Mammary epithelial cell (primary cell): ENCODE measurements at regions of chr5 and their contacts with region 1.

Region 1: DNA sequence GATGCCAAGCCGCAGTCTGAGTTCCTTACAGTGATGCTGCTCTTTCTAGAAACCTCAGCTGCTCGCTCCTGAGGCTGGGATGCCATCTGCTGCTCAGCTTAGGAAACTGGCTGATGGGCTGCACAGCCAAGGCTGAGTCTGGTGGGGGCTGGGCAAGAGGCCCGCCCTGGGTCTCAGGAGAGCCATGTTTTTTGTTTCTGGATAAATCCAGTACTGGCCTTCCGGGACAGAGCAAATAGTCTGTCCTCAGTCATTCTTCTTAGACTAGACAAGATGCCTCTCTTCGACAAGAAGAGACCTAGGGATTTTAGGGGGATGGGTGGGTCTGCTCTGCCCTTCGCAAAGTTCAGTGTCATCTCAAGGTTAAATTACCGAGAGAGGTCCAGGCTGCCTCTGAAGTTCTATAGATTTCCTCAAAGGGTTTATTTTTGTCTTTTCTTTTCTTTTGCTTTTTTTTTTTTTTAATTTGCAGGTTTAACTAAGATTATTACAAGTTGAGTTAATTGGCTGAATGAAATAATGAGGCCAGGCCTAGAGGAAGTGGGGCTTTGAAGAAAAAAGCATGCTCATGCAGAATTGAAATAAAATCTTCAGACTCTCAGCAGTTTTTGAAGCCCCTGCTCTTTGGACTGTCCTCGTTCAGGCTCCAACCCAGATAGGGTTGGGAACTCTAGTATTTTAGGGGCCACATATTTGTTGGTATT is 30.6 kb upstream of the MATR3 start:
- DNase-seq: peak; percentile 79
- H3K4me3 ChIP-seq: no peak overlapping the region
- H3K27ac ChIP-seq: no peak overlapping the region
- H3K4me1 ChIP-seq: peaks cover 6% of the 10 kb centered on the region
- H3K27me3 ChIP-seq: no peaks in the 10 kb centered on the region
- CTCF ChIP-seq: peak; percentile 90 to 98

Region 2: DNA sequence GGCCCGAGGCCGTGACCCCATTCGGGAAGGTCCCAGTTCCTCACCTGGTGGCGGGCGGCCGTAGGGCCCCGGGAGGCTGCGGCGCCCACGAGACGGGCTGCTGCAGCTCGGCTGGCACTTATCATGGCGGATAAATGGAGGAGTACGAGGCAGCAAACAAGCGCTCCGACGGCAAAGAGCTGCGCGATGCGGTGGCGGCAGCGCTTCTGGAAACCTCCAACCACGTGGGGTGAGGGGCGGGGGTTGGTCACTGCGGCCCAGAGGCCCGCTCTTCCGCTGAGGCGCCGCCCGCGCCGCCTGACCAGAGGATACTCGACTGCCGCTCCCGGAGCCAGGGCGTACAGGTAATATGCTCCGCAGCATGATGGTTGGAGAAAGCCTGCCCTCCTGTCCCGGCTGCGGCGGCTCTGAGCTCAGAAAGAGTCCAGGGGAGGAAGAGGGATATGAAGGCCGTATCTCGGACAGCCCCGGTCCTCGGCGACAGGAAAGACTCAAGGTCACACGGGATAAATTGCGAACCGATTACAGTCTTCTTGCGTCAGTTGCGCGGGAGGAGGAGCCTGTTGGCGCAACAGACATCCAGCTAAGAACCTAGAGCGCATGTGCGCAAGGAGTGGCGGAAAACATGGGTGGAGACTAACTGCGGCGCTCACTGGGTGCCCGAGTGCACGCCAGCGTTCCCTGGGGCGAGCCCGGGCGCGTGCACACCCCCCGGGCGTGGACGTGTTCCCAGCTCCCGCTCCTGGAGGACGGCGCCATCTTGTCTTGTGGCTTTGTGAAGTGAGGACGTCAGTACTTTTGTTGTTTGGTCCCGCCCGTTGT is 687.5 kb before region 1 on chr5 and contains the start of gene HSPA9:
- CTCF ChIA-PET with region 1: interaction called, 3 read pairs
- dilution Hi-C with region 1: no loop called
- in situ Hi-C with region 1: loop called (anchors 25 kb)
- intact Hi-C with region 1: loop called (anchors 1 kb)
- DNase-seq: peak; percentile 99
- H3K4me3 ChIP-seq: peak within 1 kb of the TSS; percentile 81 to 95 (median 91)
- H3K27ac ChIP-seq: peak within 1 kb of the TSS; percentile 100
- H3K4me1 ChIP-seq: peaks cover 10% of the 10 kb centered on the region
- H3K27me3 ChIP-seq: no peaks in the 10 kb centered on the region
- CTCF ChIP-seq: peak in 1 of 2 donors; percentile 14
- total RNA-seq, gene HSPA9: 301 to 332 TPM

Region 3: DNA sequence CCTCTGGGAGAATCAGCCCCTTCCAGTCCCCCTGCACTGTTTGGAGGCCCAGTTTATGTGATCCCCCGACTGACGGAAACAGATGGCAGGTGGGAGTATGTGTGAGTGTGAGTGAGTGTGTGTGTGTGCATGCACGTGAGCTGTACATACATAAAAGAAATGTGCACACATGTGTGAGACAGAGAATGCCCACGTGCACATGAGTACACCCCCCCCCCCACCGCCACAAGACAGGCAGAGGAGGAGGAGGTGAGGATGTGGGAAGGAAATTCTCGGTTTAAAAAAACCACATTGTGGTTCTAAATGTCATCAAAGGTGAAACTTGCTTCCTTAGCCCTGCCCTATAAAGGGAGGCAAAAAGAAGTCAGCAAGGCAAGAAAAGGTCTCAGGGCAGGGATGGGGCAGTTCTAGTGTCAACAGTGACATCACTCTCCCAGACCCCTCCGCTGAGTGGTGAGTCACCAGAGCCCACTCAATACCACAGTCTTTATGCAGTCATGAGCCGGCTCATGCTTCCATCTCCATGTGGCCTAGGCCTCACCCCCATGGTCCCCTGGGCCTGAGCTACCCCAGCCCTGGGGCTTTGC is 608.5 kb before region 1 on chr5:
- CTCF ChIA-PET with region 1: no interaction called
- dilution Hi-C with region 1: no loop called
- in situ Hi-C with region 1: no loop called
- intact Hi-C with region 1: loop called (anchors 1 kb)
- DNase-seq: peak; percentile 55
- H3K4me3 ChIP-seq: no peak overlapping the region
- H3K27ac ChIP-seq: no peak overlapping the region
- H3K4me1 ChIP-seq: peaks cover 13% of the 10 kb centered on the region
- H3K27me3 ChIP-seq: no peaks in the 10 kb centered on the region
- CTCF ChIP-seq: no peak

Region 4: DNA sequence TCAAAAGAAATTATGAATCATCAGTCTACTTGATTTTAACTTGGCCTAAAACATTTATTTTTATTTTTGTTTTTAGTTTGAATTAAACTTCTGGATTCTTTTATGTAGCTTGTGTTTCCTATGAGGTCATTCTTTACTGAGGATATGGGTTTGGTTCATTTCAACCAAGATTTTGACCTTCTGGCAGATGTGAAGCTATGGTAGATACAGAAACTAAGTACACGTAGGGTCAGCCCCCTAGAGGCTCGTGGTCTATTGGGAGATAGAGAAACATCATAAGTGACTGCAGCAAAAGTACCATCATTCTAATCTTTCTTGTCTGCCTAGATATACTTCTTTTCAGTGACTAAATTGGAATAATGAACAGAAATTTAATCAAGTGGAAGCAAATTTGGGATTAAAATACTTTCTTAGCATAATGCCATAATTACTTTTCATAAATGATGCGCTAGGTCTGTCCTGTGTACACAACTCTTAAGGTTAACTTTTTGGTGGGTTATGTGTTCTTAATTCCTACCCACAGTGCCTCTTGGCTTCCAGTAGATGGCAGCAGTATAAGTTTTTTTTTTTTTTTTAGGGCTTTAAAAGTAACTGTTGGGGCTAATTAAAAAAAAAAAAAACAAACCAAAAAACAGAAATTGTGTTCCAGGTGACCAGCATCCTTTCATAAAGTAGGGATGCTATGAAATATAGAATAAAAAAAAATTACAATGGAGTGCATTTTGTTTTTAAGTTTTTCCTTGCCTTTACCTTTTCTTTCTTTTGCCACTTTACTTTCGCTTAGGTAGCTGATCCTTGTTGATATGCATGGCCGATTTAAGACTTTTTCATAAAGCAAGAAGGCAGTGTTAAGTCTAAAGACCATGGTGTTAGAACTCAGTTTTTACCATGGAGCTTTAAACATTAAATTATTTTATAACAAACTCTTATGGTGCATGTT is 437.7 kb before region 1 on chr5:
- CTCF ChIA-PET with region 1: no interaction called
- dilution Hi-C with region 1: no loop called
- in situ Hi-C with region 1: no loop called
- intact Hi-C with region 1: loop called (anchors 1 kb)
- DNase-seq: no peak
- H3K4me3 ChIP-seq: no peak overlapping the region
- H3K27ac ChIP-seq: no peak overlapping the region
- H3K4me1 ChIP-seq: no peaks in the 10 kb centered on the region
- H3K27me3 ChIP-seq: no peaks in the 10 kb centered on the region
- CTCF ChIP-seq: peak; percentile 58 to 66

Region 5: GRCh38 chr5:139014726-139015125 is 248.2 kb before region 1 on chr5:
- CTCF ChIA-PET with region 1: no interaction called
- dilution Hi-C with region 1: no loop called
- in situ Hi-C with region 1: no loop called
- intact Hi-C with region 1: loop called (anchors 5 kb)
- DNase-seq: peak; percentile 83
- H3K4me3 ChIP-seq: no peak overlapping the region
- H3K27ac ChIP-seq: no peak overlapping the region
- H3K4me1 ChIP-seq: peaks cover 6% of the 10 kb centered on the region
- H3K27me3 ChIP-seq: no peaks in the 10 kb centered on the region
- CTCF ChIP-seq: no peak